Activated naive CD4-positive, alpha-beta T cell treated with anti-CD3 and anti-CD28 coated beads for 36 hours (primary cell): ENCODE measurements at regions of chr6 and their contacts with region 1.

Region 1: GRCh38 chr6:34182751-34183531 is 37.1 kb upstream of the GRM4 start:
- DNase-seq: peak; percentile 83
- H3K4me3 Mint-ChIP-seq: peak overlapping the region; percentile 76
- H3K27ac Mint-ChIP-seq: peak overlapping the region; percentile 86
- H3K4me1 Mint-ChIP-seq: peaks cover 17% of the 10 kb centered on the region
- H3K27me3 Mint-ChIP-seq: no peaks in the 10 kb centered on the region

Region 2: GRCh38 chr6:34236131-34236996 is 53.4 kb after region 1 on chr6 and contains the start of gene HMGA1:
- CTCF ChIA-PET with region 1: no interaction called
- intact Hi-C with region 1: loop called (anchors 5 kb)
- DNase-seq: peak; percentile 89
- H3K4me3 Mint-ChIP-seq: peak within 1 kb of the TSS; percentile 91
- H3K27ac Mint-ChIP-seq: peak within 1 kb of the TSS; percentile 93
- H3K4me1 Mint-ChIP-seq: peaks cover 42% of the 10 kb centered on the region
- H3K27me3 Mint-ChIP-seq: no peaks in the 10 kb centered on the region
- total RNA-seq, gene HMGA1: 705 to 712 TPM

Region 3: DNA sequence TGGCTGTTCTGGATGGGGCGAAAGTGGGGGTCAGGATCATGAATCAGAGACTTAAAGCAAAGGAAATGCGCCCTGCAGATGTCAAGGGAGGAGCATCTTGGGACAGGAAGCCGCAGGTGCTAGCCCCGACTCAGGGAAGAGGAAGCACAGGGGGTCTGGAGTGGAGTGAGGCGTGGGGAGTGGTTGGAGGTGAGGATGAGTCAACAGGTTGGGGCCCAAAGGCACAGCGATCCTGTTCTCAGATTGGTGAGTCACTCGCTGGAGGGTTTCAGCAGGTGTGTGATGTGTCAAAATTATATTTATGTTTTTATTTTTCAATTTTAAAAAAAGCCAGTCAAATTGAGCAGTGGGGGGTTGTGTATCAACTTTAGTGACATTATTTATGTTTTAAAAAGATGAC is 302.0 kb after region 1 on chr6:
- CTCF ChIA-PET with region 1: no interaction called
- intact Hi-C with region 1: no loop called
- DNase-seq: peak; percentile 94
- H3K4me3 Mint-ChIP-seq: no peak overlapping the region
- H3K27ac Mint-ChIP-seq: peak overlapping the region; percentile 72
- H3K4me1 Mint-ChIP-seq: peaks cover 24% of the 10 kb centered on the region
- H3K27me3 Mint-ChIP-seq: no peaks in the 10 kb centered on the region